ENCODE measurements at regions of chr16 and their contacts with region 1.

Region 1: GRCh38 chr16:46947900-46948547 is 25.4 kb downstream of the DNAJA2 start:
- DNase-seq: peak; percentile 67
- H3K4me3 ChIP-seq: no peak overlapping the region
- H3K27ac ChIP-seq: no peak overlapping the region
- H3K4me1 ChIP-seq: peaks cover 2% of the 10 kb centered on the region
- CTCF ChIP-seq: peak; percentile 85

Region 2: GRCh38 chr16:47018223-47018891 is 70.3 kb after region 1 on chr16:
- CTCF ChIA-PET with region 1: no interaction called
- POLR2A ChIA-PET with region 1: no interaction called
- intact Hi-C with region 1: loop called (anchors 2 kb)
- DNase-seq: peak; percentile 80
- H3K4me3 ChIP-seq: no peak overlapping the region
- H3K27ac ChIP-seq: no peak overlapping the region
- H3K4me1 ChIP-seq: peaks cover 5% of the 10 kb centered on the region
- CTCF ChIP-seq: peak; percentile 75

Region 3: GRCh38 chr16:47037746-47038458 is 89.9 kb after region 1 on chr16:
- CTCF ChIA-PET with region 1: no interaction called
- POLR2A ChIA-PET with region 1: no interaction called
- intact Hi-C with region 1: loop called (anchors 1 kb)
- DNase-seq: peak; percentile 88
- H3K4me3 ChIP-seq: peak overlapping the region; percentile 73
- H3K27ac ChIP-seq: no peak overlapping the region
- H3K4me1 ChIP-seq: peaks cover 25% of the 10 kb centered on the region
- CTCF ChIP-seq: peak; percentile 87

Region 4: GRCh38 chr16:48164907-48165726 is 1217.1 kb after region 1 on chr16:
- CTCF ChIA-PET with region 1: no interaction called
- POLR2A ChIA-PET with region 1: no interaction called
- intact Hi-C with region 1: loop called (anchors 2 kb)
- DNase-seq: peak; percentile 53
- H3K4me3 ChIP-seq: no peak overlapping the region
- H3K27ac ChIP-seq: no peak overlapping the region
- H3K4me1 ChIP-seq: no peaks in the 10 kb centered on the region
- CTCF ChIP-seq: peak; percentile 88